PC-3 (cell line): ENCODE measurements at regions of chr1 and their contacts with region 1.

Region 1: GRCh38 chr1:28449904-28450303 is 55.9 kb upstream of the RCC1 start:
- DNase-seq: peak; percentile 82
- ATAC-seq: peak; percentile 92
- H3K4me3 ChIP-seq: no peak overlapping the region
- H3K27ac ChIP-seq: peak overlapping the region; percentile 78
- H3K4me1 ChIP-seq: peaks cover 15% of the 10 kb centered on the region
- H3K27me3 ChIP-seq: no peaks in the 10 kb centered on the region
- CTCF ChIP-seq: no peak

Region 2: GRCh38 chr1:28417429-28417922 is 32.4 kb before region 1 on chr1:
- CTCF ChIA-PET with region 1: no interaction called
- POLR2A ChIA-PET with region 1: no interaction called
- intact Hi-C with region 1: loop called (anchors 5 kb)
- DNase-seq: peak; percentile 63
- ATAC-seq: peak; percentile 81
- H3K4me3 ChIP-seq: no peak overlapping the region; the same call in 1 of the 2 replicates
- H3K27ac ChIP-seq: peak overlapping the region; percentile 43
- H3K4me1 ChIP-seq: peaks cover 35% of the 10 kb centered on the region
- H3K27me3 ChIP-seq: no peaks in the 10 kb centered on the region
- CTCF ChIP-seq: no peak